A549 (cell line): ENCODE measurements at regions of chr20 and their contacts with region 1.

Region 1: DNA sequence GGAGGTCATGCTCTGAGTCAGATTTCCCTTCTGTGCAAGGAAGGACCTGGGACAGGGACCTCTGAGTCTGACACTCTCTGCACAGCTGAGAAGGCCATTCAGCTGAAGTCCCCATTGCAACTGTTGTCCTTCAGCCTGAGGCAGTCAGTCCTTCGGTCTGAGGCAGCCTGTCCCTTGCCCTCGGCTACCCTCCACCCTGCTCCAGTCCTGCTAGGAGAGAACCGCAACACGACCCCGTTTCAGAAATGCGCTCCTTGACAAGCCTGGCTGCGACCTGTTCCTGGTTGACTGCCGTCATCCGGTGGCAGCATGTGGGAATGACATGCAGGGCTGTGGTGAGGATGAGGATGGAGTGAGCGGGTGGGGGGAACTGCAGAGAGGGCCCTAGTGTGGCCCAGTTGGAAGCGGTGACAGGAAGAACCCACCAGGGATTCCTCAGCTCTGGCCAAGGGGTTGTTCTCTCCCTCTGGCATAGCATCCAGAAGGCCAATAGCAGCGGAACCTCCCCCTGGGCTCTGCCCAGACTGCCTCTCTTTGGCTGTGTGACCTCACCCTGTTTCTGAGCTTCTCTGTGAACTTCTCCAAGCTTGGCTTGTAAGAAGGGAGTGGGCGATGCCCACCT is 40.3 kb upstream of the ANGPT4 start:
- DNase-seq: peak; percentile 77 to 89
- ATAC-seq: peak; percentile 72 to 90
- H3K4me3 ChIP-seq: no peak overlapping the region
- H3K27ac ChIP-seq: no peak overlapping the region
- H3K4me1 ChIP-seq: no peaks in the 10 kb centered on the region
- CTCF ChIP-seq: peak; percentile 98
- EP300 ChIP-seq: no peak
- POLR2A ChIP-seq: no peak
- RAD21 ChIP-seq: peak; percentile 98 to 99

Region 2: DNA sequence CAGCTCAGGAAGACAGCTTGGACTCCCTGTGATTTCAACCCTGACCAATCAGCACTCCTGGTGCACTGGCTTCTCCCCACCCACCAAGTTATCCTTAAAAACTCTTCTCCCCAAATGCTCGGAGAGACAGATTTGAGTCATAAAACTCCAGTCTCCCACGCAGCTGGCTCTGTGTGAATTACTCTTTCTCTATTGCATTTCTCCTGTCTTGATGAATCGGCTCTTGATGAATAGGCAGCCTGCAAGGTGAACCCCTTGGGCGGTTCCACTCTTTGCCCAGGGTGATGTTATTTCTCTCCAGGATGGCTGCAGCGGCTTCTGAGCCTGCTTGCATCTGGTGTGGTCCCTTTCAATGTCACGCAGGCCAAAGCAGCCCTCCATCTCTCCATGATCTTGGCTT is 200.5 kb before region 1 on chr20:
- CTCF ChIA-PET with region 1: no interaction called
- POLR2A ChIA-PET with region 1: no interaction called
- DNase-seq: no peak
- ATAC-seq: no peak
- H3K4me3 ChIP-seq: no peak overlapping the region
- H3K27ac ChIP-seq: no peak overlapping the region
- H3K4me1 ChIP-seq: no peaks in the 10 kb centered on the region
- CTCF ChIP-seq: no peak
- EP300 ChIP-seq: no peak
- POLR2A ChIP-seq: no peak
- RAD21 ChIP-seq: no peak

Region 3: GRCh38 chr20:796921-797320 is 159.5 kb before region 1 on chr20:
- CTCF ChIA-PET with region 1: interaction called, 37 read pairs
- POLR2A ChIA-PET with region 1: interaction called, 3 read pairs
- DNase-seq: no peak
- ATAC-seq: no peak
- H3K4me3 ChIP-seq: no peak overlapping the region
- H3K27ac ChIP-seq: no peak overlapping the region
- H3K4me1 ChIP-seq: no peaks in the 10 kb centered on the region
- CTCF ChIP-seq: no peak
- EP300 ChIP-seq: no peak
- POLR2A ChIP-seq: no peak
- RAD21 ChIP-seq: no peak

Region 4: DNA sequence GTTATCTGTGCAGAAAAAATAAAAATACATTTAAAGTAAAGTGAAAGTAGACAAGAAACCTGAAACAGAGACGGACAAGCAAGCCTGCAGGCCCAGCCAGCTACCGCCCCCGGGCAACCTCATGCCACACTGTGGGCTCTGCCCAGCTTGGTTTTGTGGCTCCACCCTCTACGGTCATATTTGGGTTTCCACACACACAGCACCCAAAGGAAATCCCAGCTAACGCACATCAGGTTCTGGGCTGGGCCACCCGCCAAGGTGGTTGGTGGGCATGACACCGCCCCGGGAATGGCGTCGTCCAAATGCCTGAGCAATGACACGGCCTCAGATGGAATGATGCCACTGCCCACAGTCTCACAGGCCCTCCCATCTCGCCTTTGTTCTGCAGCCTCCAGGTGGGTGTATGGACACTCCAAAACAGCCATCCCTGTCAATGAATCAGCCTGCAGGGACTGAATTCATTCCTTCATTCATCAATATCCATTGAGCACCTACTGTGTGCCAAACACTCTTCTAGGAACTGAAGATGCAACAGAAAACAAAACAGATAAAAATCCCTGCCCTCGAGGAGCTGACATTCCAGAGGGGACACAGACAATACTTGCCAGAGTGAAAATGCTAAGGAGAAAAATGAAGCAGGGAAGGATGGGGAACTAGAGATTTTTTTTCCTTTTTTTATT is 99.9 kb before region 1 on chr20:
- CTCF ChIA-PET with region 1: interaction called, 78 read pairs
- POLR2A ChIA-PET with region 1: interaction called, 6 read pairs
- DNase-seq: peak; percentile 72 to 82
- ATAC-seq: peak; percentile 81 to 89
- H3K4me3 ChIP-seq: no peak overlapping the region
- H3K27ac ChIP-seq: peak overlapping the region; percentile 31 to 77; a peak in 4 of 6 replicates
- H3K4me1 ChIP-seq: peaks cover 14% of the 10 kb centered on the region
- CTCF ChIP-seq: no peak
- EP300 ChIP-seq: no peak
- POLR2A ChIP-seq: no peak
- RAD21 ChIP-seq: no peak

Region 5: GRCh38 chr20:919491-919916 is 36.9 kb before region 1 on chr20:
- CTCF ChIA-PET with region 1: interaction called, 25 read pairs
- POLR2A ChIA-PET with region 1: no interaction called
- DNase-seq: no peak
- ATAC-seq: no peak
- H3K4me3 ChIP-seq: no peak overlapping the region
- H3K27ac ChIP-seq: no peak overlapping the region
- H3K4me1 ChIP-seq: no peaks in the 10 kb centered on the region
- CTCF ChIP-seq: no peak
- EP300 ChIP-seq: no peak
- POLR2A ChIP-seq: no peak
- RAD21 ChIP-seq: no peak

Region 6: DNA sequence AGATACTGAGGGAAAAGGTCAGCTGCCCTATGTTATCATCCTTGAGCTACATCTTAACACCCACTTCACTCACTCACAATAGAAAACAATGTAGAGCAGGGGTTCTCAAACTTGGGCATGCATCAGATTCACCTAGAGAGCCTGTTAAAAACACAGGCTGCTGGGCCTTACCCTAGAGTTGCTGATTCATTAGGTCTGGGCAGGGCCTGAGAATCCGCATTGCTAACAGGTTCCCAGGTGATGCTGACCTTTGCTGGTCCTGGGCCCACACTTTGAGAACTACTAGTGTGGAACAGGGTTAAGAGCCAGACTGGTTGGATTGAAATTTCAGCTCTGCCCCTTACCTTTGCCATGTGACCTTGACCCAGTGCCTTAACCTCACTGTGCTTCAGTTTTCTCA is 20.6 kb after region 1 on chr20:
- CTCF ChIA-PET with region 1: interaction called, 127 read pairs
- POLR2A ChIA-PET with region 1: no interaction called
- DNase-seq: no peak
- ATAC-seq: no peak
- H3K4me3 ChIP-seq: no peak overlapping the region
- H3K27ac ChIP-seq: no peak overlapping the region
- H3K4me1 ChIP-seq: no peaks in the 10 kb centered on the region
- CTCF ChIP-seq: no peak
- EP300 ChIP-seq: no peak
- POLR2A ChIP-seq: no peak
- RAD21 ChIP-seq: no peak

Region 7: DNA sequence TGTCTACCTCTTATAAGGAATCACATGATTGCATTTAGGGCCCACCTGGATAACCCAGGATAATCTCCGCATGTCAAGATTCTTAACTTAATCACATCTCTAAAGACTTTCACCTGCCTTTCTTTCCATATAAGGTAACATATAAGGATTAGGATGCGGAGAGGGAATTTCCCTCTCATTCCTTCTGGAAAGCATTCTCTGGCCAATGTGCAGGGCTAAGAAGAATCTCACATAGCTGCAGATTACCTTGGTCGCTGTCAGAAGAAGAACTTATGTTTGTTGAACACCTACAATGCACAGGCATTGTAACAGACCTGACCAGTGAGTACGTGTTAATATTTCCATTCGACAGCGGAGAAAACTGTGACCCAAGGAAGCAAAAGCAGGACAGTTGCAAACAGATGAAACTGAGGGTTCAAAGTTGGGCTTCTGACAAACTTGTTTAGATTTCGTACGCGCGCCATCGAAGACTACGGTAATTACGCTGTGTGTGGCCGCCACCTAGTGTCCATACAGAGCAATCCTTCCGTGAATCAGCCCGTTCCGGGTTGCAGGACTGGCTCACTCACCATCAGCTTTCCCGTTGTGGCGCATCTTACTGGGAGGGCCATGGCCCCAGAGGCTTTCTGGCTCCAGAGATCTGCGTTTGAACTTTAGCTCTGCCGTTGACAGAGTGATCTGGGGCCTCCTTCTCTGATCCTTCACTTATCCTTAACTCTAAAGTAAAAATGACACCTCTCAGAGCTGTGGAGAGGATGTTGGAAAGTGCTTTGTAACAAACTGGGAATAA is 256.4 kb after region 1 on chr20:
- CTCF ChIA-PET with region 1: interaction called, 51 read pairs
- POLR2A ChIA-PET with region 1: no interaction called
- DNase-seq: peak; percentile 82 to 83
- ATAC-seq: peak; percentile 96 to 99
- H3K4me3 ChIP-seq: no peak overlapping the region
- H3K27ac ChIP-seq: no peak overlapping the region
- H3K4me1 ChIP-seq: no peaks in the 10 kb centered on the region
- CTCF ChIP-seq: peak; percentile 92
- EP300 ChIP-seq: no peak
- POLR2A ChIP-seq: no peak
- RAD21 ChIP-seq: peak; percentile 89 to 91